K562 (cell line): ENCODE measurements at regions of chr7 and their contacts with region 1.

Region 1: GRCh38 chr7:140275069-140275965 is 98.5 kb upstream of the KDM7A start:
- DNase-seq: peak; percentile 63 to 81 (median 68)
- ATAC-seq: peak; percentile 86
- H3K4me3 ChIP-seq: no peak overlapping the region
- H3K27ac ChIP-seq: peak overlapping the region; percentile 48; the same call in 1 of the 3 replicates
- H3K4me1 ChIP-seq: peaks cover 16 to 18% of the 10 kb centered on the region in 2 experiments
- H3K27me3 ChIP-seq: no peaks in the 10 kb centered on the region
- CTCF ChIP-seq: no peak
- EP300 ChIP-seq: peak; percentile 74
- POLR2A ChIP-seq: no peak
- RAD21 ChIP-seq: no peak; a peak in 1 of 4 replicates

Region 2: DNA sequence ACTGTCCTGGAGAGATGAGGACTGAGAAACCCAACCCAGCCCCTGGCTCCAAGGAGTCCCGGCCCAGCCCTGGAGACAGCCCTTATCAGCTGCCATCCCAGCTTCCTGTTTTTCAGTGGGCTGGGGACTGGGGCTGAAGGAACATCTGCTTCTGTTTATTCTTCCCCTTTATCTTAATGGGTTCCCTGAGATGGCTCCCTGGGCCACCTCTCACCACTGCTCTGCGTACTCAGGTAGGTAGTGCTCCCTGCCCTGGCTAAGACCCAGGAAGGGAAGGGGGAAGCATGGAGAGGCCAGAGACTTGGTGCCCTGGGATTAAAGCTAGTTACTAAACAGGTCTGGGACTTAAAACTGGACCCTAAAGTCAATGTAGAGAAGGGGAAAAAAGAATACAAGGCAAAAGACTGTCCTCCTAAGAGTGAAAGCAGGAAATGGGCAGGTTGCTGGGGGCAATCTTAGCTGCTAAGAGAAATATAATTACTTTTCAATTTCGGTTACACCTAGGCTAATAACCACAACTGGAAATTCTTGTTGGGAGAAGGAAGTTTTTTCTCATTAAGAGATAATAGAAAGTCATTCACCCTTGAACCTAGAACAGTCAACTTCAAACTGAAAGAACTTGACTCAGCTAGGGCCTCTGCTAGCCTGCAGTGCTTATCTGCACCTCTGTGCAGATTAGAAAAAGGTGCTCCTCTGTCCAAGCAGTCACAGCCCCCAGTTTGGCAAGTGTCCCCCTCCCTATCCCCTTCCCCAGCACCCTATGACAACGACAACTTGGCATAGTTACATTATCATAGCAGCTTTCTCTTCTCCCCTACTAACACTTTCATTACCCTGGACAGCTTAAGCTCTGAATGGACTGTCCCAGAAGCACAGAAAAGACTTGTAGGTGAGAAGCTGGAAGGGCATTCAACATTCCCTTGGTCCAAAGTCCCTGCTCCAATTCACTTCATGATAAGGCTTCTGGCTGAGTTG is 33.0 kb before region 1 on chr7:
- CTCF ChIA-PET with region 1: no interaction called
- POLR2A ChIA-PET with region 1: interaction called, 5 read pairs
- in situ Hi-C with region 1: no loop called
- intact Hi-C with region 1: loop called (anchors 2 kb)
- DNase-seq: peak; percentile 82 to 96 (median 91)
- ATAC-seq: peak; percentile 91
- H3K4me3 ChIP-seq: peak overlapping the region; percentile 11
- H3K27ac ChIP-seq: peak overlapping the region; percentile 78
- H3K4me1 ChIP-seq: peaks cover 36 to 46% of the 10 kb centered on the region in 2 experiments
- H3K27me3 ChIP-seq: no peaks in the 10 kb centered on the region
- CTCF ChIP-seq: no peak
- EP300 ChIP-seq: peak; percentile 96
- POLR2A ChIP-seq: no peak
- RAD21 ChIP-seq: peak; percentile 20 to 21; a peak in 1 of 4 replicates

Region 3: GRCh38 chr7:140260352-140261104 is 14.8 kb before region 1 on chr7:
- CTCF ChIA-PET with region 1: no interaction called
- POLR2A ChIA-PET with region 1: interaction called, 10 read pairs
- in situ Hi-C with region 1: no loop called
- intact Hi-C with region 1: no loop called
- DNase-seq: peak in 1 of 4 experiments; percentile 10
- ATAC-seq: peak; percentile 22
- H3K4me3 ChIP-seq: no peak overlapping the region
- H3K27ac ChIP-seq: no peak overlapping the region
- H3K4me1 ChIP-seq: peaks cover 0 to 3% of the 10 kb centered on the region in 2 experiments; a peak in 2 of 5 replicates
- H3K27me3 ChIP-seq: no peaks in the 10 kb centered on the region
- CTCF ChIP-seq: no peak
- EP300 ChIP-seq: no peak
- POLR2A ChIP-seq: no peak
- RAD21 ChIP-seq: no peak

Region 4: DNA sequence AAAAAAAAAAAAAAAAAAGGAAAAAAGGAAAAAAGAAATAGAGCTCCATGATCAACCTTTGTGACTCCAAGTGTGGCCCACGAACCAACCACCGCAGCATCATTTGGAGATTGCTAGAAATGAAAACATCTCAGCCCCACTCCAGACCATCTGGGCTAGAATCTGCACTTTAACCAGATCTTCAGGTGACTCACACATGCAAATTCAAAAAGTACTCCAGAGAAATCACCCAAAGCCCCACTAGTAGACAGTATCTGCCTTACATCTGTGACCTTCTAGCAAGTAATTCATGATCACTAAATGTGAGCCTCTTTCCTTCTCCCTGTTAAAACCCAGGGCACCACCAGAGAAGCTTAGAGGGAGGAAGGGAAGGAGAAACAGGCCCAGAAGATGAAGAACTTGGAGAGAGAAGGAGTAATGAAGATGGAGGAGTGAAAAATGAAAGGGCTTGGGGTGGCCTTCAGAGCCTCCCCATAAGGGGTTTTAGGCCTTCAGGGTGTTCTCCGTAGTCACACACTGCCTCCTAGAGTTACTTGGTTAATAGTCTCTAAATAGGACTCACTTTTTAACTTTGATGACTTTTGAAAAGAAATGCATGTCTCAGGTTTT is 29.0 kb after region 1 on chr7:
- CTCF ChIA-PET with region 1: no interaction called
- POLR2A ChIA-PET with region 1: no interaction called
- in situ Hi-C with region 1: no loop called
- intact Hi-C with region 1: no loop called
- DNase-seq: peak in 3 of 4 experiments; percentile 44 to 72 (median 72)
- ATAC-seq: peak; percentile 89
- H3K4me3 ChIP-seq: no peak overlapping the region
- H3K27ac ChIP-seq: no peak overlapping the region
- H3K4me1 ChIP-seq: no peaks in the 10 kb centered on the region
- H3K27me3 ChIP-seq: no peaks in the 10 kb centered on the region
- CTCF ChIP-seq: peak; percentile 66 to 90 (median 68)
- EP300 ChIP-seq: no peak
- POLR2A ChIP-seq: no peak
- RAD21 ChIP-seq: peak; percentile 91

Region 5: GRCh38 chr7:141012044-141012685 is 736.8 kb after region 1 on chr7:
- CTCF ChIA-PET with region 1: no interaction called
- POLR2A ChIA-PET with region 1: no interaction called
- in situ Hi-C with region 1: no loop called
- intact Hi-C with region 1: no loop called
- DNase-seq: peak; percentile 38 to 78 (median 50)
- ATAC-seq: peak; percentile 51
- H3K4me3 ChIP-seq: no peak overlapping the region
- H3K27ac ChIP-seq: no peak overlapping the region
- H3K4me1 ChIP-seq: peaks cover 8 to 21% of the 10 kb centered on the region in 2 experiments; a peak in 2 of 5 replicates
- H3K27me3 ChIP-seq: no peaks in the 10 kb centered on the region
- CTCF ChIP-seq: peak; percentile 82 to 93 (median 82)
- EP300 ChIP-seq: no peak
- POLR2A ChIP-seq: no peak
- RAD21 ChIP-seq: peak; percentile 71 to 74